CD8-positive, alpha-beta T cell (primary cell): ENCODE measurements at regions of chr13 and their contacts with region 1.

Region 1: DNA sequence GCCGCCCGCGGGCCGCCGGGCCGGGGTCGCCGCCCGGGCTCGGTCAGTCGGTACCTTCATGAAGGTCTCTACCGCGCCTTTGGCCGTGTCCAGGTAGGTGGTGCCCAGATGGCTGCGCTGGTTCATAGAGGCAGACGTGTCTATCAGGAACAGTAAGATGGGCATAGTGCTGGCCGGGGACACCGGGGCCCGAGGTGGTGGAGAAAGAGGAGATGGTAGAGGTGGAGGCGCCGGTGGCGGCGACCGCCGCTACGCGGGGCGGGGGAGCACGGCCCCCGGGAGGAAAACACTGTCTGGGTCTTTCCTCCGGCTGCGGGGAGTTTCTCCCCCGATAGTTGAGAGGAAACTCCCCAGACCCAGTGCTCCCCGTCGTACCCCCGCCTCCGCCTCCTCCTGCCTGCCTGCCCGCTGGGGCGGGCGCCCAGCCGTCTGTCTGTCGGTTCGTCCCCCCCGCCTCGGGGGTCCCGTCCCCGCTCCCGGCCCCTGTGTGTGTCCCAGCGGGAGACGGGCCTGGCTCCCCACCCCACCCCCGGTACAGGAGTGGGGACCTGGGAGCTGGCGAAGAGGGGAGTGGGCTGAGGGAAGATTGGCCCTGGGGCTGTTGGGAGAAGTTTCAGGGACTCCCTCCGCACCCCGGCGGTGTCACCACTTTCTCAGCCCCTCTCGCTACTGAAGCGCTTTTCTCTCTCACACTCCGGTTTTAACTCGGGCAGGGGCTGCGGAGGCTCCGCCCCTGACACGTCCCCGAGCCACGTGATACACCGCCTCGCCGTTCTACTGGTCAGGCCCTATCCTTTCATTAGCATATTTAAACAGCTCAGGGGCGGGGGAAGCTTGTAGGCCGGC is at the start of gene INTS6:
- DNase-seq: peak; percentile 98 to 99 (median 99)
- ATAC-seq: peak; percentile 83
- H3K4me3 ChIP-seq: peak within 1 kb of the TSS; percentile 83 to 93
- H3K4me3 Mint-ChIP-seq: peak within 1 kb of the TSS; percentile 97
- H3K27ac ChIP-seq: peak within 1 kb of the TSS; percentile 91 to 94
- H3K27ac Mint-ChIP-seq: peak within 1 kb of the TSS; percentile 99
- H3K4me1 ChIP-seq: peaks cover 31% of the 10 kb centered on the region
- H3K4me1 Mint-ChIP-seq: peaks cover 55% of the 10 kb centered on the region
- H3K27me3 ChIP-seq: no peaks in the 10 kb centered on the region
- H3K27me3 Mint-ChIP-seq: no peaks in the 10 kb centered on the region
- CTCF ChIP-seq: no peak
- total RNA-seq, gene INTS6: 49.5 to 50.0 TPM

Region 2: DNA sequence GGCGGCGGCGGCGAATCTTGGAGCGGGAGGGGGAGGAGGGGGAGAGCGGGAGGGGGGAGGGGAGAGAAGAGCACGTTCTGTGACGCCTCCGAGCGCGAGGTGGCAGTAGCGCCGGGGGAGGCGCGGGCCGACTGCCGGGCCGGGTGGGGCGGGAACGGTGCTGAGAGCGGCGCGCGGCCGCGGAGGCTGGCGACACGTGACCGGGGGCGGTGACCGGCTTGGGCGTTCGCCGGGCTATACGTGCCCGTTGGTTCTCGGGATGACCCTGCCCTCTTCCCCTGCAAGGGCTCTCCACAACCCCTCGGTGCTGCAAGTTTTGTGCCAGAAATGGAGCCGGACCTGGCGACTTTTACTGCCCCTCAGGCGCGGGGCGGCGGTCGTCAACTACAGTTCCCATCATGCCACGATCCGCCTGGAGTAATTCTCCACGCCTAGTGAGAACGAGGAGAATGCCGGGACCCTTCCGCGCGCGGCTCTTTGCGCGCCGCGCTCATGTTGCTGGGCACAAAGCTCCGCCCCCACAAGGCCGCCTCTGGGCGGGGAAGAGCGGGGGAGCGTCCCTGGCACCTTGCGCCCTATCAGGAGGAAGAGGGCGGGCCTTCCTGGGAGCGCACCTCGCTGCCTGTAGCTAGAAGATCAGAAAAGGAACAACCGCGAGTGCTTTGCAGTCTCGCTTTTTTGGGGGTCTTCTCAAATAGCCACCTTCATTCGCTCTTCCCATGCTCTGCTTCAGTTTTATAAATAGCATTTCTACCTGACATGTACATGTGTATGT is 1659.8 kb before region 1 on chr13 and contains the start of gene KPNA3:
- CTCF ChIA-PET with region 1: no interaction called
- POLR2A ChIA-PET with region 1: interaction called, 6 read pairs
- intact Hi-C with region 1: loop called (anchors 1 to 5 kb)
- DNase-seq: peak; percentile 92 to 98 (median 96)
- ATAC-seq: peak; percentile 91
- H3K4me3 ChIP-seq: peak within 1 kb of the TSS; percentile 83 to 99
- H3K4me3 Mint-ChIP-seq: peak within 1 kb of the TSS; percentile 95
- H3K27ac ChIP-seq: peak within 1 kb of the TSS; percentile 79 to 89
- H3K27ac Mint-ChIP-seq: peak within 1 kb of the TSS; percentile 96
- H3K4me1 ChIP-seq: peaks cover 21% of the 10 kb centered on the region
- H3K4me1 Mint-ChIP-seq: peaks cover 34% of the 10 kb centered on the region
- H3K27me3 ChIP-seq: peaks cover 0 to 7% of the 10 kb centered on the region in 2 experiments
- H3K27me3 Mint-ChIP-seq: peaks cover 9% of the 10 kb centered on the region
- CTCF ChIP-seq: no peak
- total RNA-seq, gene KPNA3: 22.3 to 23.5 TPM

Region 3: DNA sequence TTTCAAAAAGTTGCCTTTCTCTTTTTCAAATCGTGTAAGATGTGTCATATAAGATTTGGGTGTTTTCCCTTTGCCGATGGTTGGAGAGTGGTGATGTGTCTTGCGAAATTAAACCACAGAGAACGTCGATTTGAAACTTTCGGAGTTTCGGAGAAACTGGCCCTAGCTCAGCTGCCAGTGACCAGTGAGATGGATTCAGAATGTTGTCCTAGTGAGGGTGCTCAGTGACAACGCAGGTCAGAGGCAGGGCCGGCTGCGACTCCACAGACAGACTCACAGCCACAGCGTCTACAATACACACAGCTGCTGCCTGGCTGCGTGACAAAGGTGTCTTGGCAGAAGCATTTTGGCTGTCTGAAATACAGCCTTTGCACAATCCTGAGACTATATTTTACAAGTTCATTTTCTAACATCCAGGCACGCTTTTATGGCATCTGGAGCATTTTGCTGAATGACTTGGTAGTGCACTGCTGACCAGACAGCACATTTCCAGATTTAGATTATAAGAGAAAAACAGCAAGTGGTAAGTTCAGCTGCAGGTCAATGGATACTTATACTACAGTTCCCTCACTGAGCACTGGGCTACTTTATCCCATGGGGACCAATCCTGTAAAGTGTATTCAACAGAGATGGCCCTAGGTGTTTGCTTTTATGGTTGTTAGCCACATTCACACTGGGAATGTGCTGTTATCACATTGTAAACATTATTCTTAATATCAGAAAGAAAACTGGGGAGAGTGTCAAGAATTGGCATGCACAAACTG is 1229.8 kb before region 1 on chr13:
- CTCF ChIA-PET with region 1: no interaction called
- POLR2A ChIA-PET with region 1: no interaction called
- intact Hi-C with region 1: no loop called
- DNase-seq: peak in 2 of 9 experiments; percentile 48 to 64
- ATAC-seq: peak; percentile 57
- H3K4me3 ChIP-seq: peak overlapping the region in 1 of 2 experiments; percentile 25
- H3K4me3 Mint-ChIP-seq: peak overlapping the region; percentile 72
- H3K27ac ChIP-seq: no peak overlapping the region
- H3K27ac Mint-ChIP-seq: peak overlapping the region; percentile 53
- H3K4me1 ChIP-seq: no peaks in the 10 kb centered on the region
- H3K4me1 Mint-ChIP-seq: peaks cover 14% of the 10 kb centered on the region
- H3K27me3 ChIP-seq: no peaks in the 10 kb centered on the region
- H3K27me3 Mint-ChIP-seq: peaks cover 2% of the 10 kb centered on the region
- CTCF ChIP-seq: no peak

Region 4: GRCh38 chr13:51425410-51426042 is 27.1 kb before region 1 on chr13:
- CTCF ChIA-PET with region 1: no interaction called
- POLR2A ChIA-PET with region 1: interaction called, 19 read pairs
- intact Hi-C with region 1: no loop called
- DNase-seq: no peak
- ATAC-seq: no peak
- H3K4me3 ChIP-seq: no peak overlapping the region
- H3K4me3 Mint-ChIP-seq: no peak overlapping the region
- H3K27ac ChIP-seq: no peak overlapping the region
- H3K27ac Mint-ChIP-seq: no peak overlapping the region
- H3K4me1 ChIP-seq: peaks cover 53% of the 10 kb centered on the region
- H3K4me1 Mint-ChIP-seq: peaks cover 81% of the 10 kb centered on the region
- H3K27me3 ChIP-seq: no peaks in the 10 kb centered on the region
- H3K27me3 Mint-ChIP-seq: no peaks in the 10 kb centered on the region
- CTCF ChIP-seq: no peak

Region 5: GRCh38 chr13:51583875-51584730 is 131.5 kb after region 1 on chr13 and contains the start of gene WDFY2:
- CTCF ChIA-PET with region 1: interaction called, 6 read pairs
- POLR2A ChIA-PET with region 1: interaction called, 35 read pairs
- intact Hi-C with region 1: loop called (anchors 1 kb)
- DNase-seq: peak; percentile 98 to 100 (median 99)
- ATAC-seq: peak; percentile 82
- H3K4me3 ChIP-seq: peak within 1 kb of the TSS; percentile 71 to 81
- H3K4me3 Mint-ChIP-seq: peak within 1 kb of the TSS; percentile 99
- H3K27ac ChIP-seq: peak within 1 kb of the TSS; percentile 83 to 89
- H3K27ac Mint-ChIP-seq: peak within 1 kb of the TSS; percentile 100
- H3K4me1 ChIP-seq: peaks cover 11% of the 10 kb centered on the region
- H3K4me1 Mint-ChIP-seq: peaks cover 35% of the 10 kb centered on the region
- H3K27me3 ChIP-seq: no peaks in the 10 kb centered on the region
- H3K27me3 Mint-ChIP-seq: no peaks in the 10 kb centered on the region
- CTCF ChIP-seq: no peak
- total RNA-seq, gene WDFY2: 17.2 to 18.6 TPM

Region 6: DNA sequence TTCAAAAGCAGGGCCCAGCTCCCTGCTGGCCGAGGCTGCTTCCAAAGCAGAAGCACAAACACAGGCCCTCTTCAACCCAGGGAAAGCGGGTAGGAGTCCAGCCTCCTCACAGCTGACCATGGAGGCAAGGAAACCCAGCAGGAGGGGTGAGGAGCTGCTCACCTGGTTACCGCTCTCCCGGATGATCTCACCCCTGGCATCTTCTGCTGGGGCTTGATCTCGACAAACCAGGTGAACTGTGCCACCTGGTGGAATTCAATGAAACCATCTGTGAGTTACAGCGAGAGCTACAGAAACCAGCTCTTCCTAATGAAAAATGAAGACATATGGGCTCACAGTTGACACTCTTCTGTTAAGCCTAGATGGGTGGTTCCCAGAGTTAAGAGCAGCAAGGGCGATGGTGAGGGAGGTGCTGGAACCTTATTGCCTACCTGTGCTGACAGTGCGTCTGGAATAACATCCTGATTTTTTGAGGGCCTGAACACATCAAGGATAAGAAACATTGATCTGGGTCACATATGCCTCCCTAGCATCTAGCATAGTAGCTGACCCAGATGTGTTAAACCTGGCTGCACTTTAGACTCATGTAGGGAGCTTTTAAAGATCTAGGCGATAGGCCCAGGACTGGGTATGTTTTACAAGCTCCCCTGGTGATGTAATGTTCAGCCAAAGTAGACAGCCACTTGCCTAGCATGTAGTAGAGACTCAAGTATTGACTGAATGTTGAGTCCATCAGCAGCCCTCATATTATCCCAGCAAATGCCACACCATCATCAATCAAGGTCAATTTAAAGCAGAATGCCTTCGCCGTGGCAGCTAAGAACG is 345.3 kb after region 1 on chr13:
- CTCF ChIA-PET with region 1: interaction called, 6 read pairs
- POLR2A ChIA-PET with region 1: interaction called, 30 read pairs
- intact Hi-C with region 1: loop called in 1 of 2 experiments (anchors 1 kb)
- DNase-seq: peak in 8 of 9 experiments; percentile 30 to 81 (median 58)
- ATAC-seq: peak; percentile 60
- H3K4me3 ChIP-seq: no peak overlapping the region
- H3K4me3 Mint-ChIP-seq: no peak overlapping the region
- H3K27ac ChIP-seq: no peak overlapping the region
- H3K27ac Mint-ChIP-seq: peak overlapping the region; percentile 62
- H3K4me1 ChIP-seq: peaks cover 20% of the 10 kb centered on the region
- H3K4me1 Mint-ChIP-seq: peaks cover 26% of the 10 kb centered on the region
- H3K27me3 ChIP-seq: no peaks in the 10 kb centered on the region
- H3K27me3 Mint-ChIP-seq: no peaks in the 10 kb centered on the region
- CTCF ChIP-seq: peak; percentile 51

Region 7: GRCh38 chr13:52011632-52012511 is 559.3 kb after region 1 on chr13 and contains the start of gene ALG11:
- CTCF ChIA-PET with region 1: no interaction called
- POLR2A ChIA-PET with region 1: no interaction called
- intact Hi-C with region 1: loop called (anchors 1 to 2 kb)
- DNase-seq: peak; percentile 98 to 100 (median 99)
- ATAC-seq: peak; percentile 98
- H3K4me3 ChIP-seq: peak within 1 kb of the TSS; percentile 70 to 88
- H3K4me3 Mint-ChIP-seq: peak within 1 kb of the TSS; percentile 99
- H3K27ac ChIP-seq: peak within 1 kb of the TSS; percentile 57 to 75
- H3K27ac Mint-ChIP-seq: peak within 1 kb of the TSS; percentile 95
- H3K4me1 ChIP-seq: peaks cover 15% of the 10 kb centered on the region
- H3K4me1 Mint-ChIP-seq: peaks cover 35% of the 10 kb centered on the region
- H3K27me3 ChIP-seq: no peaks in the 10 kb centered on the region
- H3K27me3 Mint-ChIP-seq: peaks cover 7% of the 10 kb centered on the region
- CTCF ChIP-seq: no peak
- total RNA-seq, gene ALG11: 34.0 to 35.1 TPM

Region 8: GRCh38 chr13:52652196-52652979 is 1199.8 kb after region 1 on chr13 and contains the start of gene SUGT1:
- CTCF ChIA-PET with region 1: no interaction called
- POLR2A ChIA-PET with region 1: no interaction called
- intact Hi-C with region 1: loop called in 1 of 2 experiments (anchors 5 kb)
- DNase-seq: peak; percentile 88 to 98 (median 95)
- ATAC-seq: peak; percentile 92
- H3K4me3 ChIP-seq: peak within 1 kb of the TSS; percentile 70 to 87
- H3K4me3 Mint-ChIP-seq: no peak within 1 kb of the TSS
- H3K27ac ChIP-seq: peak within 1 kb of the TSS; percentile 94 to 96
- H3K27ac Mint-ChIP-seq: no peak within 1 kb of the TSS
- H3K4me1 ChIP-seq: peaks cover 32% of the 10 kb centered on the region
- H3K4me1 Mint-ChIP-seq: peaks cover 7% of the 10 kb centered on the region
- H3K27me3 ChIP-seq: no peaks in the 10 kb centered on the region
- H3K27me3 Mint-ChIP-seq: no peaks in the 10 kb centered on the region
- CTCF ChIP-seq: peak; percentile 68
- total RNA-seq, gene SUGT1: 17.8 to 20.0 TPM